ENCODE measurements at regions of chr20 and their contacts with region 1.

Region 1: GRCh38 chr20:44615169-44615791 is 32.9 kb downstream of the PKIG start:
- DNase-seq: peak in 2 of 3 donors; percentile 71 to 75
- H3K4me3 ChIP-seq: no peak overlapping the region
- H3K27ac ChIP-seq: peak overlapping the region in 1 of 2 experiments; percentile 70
- H3K4me1 ChIP-seq: peaks cover 9 to 65% (median 32%) of the 10 kb centered on the region in 4 experiments
- H3K27me3 ChIP-seq: no peaks in the 10 kb centered on the region

Region 2: DNA sequence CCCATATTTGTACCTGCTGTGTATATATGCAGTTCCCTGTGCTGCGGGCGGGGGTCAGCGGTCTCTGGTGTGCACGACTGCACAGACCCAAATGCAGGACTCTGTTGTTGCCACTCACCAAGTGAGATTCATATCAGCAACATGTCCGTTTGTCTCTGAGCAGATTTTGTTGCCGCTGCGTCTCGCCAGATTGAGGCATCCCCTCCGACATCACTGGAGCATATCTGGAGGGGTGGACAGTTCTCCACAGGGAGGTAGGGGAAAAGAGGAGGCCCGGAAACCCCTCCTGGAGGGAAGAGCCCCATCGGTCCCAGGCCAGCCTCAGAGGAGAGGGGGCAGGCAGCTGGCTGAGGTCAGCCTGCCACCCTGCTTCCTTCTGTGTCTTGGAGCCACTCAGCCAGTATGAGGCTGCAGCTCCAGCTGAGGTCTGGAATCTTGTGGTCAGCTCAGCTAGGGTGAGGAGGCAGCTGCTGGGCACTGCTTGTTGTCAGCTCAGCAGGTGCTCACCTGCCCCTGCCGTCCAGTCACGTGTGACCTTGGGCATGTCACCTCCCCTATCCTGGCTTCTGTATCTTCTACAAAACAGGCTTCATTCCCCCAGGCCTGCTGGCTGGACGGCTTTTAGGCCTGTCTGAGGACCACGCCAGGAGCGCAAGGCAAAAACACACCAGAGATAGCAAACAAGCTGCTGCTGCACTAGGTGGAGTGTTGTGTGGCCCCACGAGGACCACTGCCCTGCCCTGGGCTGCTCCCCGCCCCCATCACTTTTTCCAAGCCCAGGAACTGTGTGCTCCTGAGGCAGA is 212.7 kb before region 1 on chr20:
- CTCF ChIA-PET with region 1: no interaction called
- POLR2A ChIA-PET with region 1: no interaction called
- DNase-seq: no peak
- H3K4me3 ChIP-seq: no peak overlapping the region
- H3K27ac ChIP-seq: no peak overlapping the region
- H3K4me1 ChIP-seq: peaks cover 0 to 3% (median 0%) of the 10 kb centered on the region in 4 experiments
- H3K27me3 ChIP-seq: peaks cover 0 to 6% (median 0%) of the 10 kb centered on the region in 5 experiments

Region 3: DNA sequence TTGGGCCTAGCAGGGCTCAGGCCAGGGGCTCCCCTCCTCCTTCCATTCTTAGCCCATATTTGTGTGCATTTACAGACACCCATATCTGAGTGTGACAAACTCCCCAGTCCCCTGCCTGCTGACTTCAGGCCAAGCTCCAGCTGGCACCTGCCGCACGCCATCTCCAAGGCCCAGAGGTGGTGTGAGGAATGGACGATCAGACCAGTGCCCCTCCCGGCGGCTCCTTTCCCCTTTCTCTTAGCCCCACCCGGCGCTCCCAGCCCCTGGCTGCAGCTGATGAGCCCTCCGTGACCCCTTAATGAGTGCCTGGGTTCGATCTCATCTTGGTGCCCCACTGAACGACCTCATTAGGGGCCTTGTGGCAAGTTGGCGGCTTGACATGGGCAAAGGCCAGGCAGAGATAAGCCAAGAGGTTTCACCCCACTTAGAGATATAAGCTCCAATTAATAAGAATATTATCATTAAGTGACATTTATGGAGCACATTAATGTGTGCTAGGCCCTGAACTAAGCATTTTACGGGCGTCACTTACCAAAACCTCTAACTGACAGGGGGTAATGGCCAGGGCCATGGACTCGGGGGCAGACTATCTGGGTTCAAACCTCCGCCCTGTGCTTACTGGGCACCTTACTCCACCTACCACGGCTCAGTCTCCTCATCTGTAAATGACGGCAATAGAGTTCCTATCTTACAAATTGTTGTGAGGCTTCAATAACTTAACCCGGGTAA is 18.8 kb after region 1 on chr20:
- CTCF ChIA-PET with region 1: interaction called, 11 read pairs
- POLR2A ChIA-PET with region 1: no interaction called
- DNase-seq: no peak
- H3K4me3 ChIP-seq: no peak overlapping the region
- H3K27ac ChIP-seq: no peak overlapping the region
- H3K4me1 ChIP-seq: no peaks in the 10 kb centered on the region
- H3K27me3 ChIP-seq: no peaks in the 10 kb centered on the region

Measured in common myeloid progenitor, CD34-positive (primary cell).